ENCODE measurements at regions of chr2 and their contacts with region 1.

Region 1: DNA sequence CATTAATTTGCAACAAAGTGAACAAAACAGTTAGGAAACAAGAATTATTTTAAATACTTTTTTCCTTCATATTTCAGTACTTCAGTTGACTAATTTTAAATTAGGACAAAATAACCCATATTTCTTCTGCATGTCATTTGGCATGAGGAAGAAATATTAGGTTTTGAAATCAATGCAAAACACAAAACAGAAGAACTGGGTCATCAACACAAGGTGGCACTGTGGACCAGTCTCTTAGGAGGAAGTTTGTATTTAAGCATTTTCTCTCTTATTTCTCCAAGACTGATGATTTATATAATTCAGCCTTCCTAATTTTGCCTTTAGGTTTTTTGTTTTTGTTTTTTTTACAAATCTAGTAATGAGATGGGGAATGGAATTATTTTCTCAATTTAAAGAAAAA is 352.8 kb upstream of the KCNH7 start:
- DNase-seq: peak in 1 of 2 experiments; percentile 20
- H3K4me3 ChIP-seq: no peak overlapping the region
- H3K4me3 Mint-ChIP-seq: no peak overlapping the region
- H3K27ac Mint-ChIP-seq: no peak overlapping the region
- H3K4me1 ChIP-seq: no peaks in the 10 kb centered on the region
- H3K4me1 Mint-ChIP-seq: no peaks in the 10 kb centered on the region
- H3K27me3 ChIP-seq: no peaks in the 10 kb centered on the region
- H3K27me3 Mint-ChIP-seq: peaks cover 2% of the 10 kb centered on the region
- CTCF ChIP-seq: peak; percentile 51 to 61

Region 2: DNA sequence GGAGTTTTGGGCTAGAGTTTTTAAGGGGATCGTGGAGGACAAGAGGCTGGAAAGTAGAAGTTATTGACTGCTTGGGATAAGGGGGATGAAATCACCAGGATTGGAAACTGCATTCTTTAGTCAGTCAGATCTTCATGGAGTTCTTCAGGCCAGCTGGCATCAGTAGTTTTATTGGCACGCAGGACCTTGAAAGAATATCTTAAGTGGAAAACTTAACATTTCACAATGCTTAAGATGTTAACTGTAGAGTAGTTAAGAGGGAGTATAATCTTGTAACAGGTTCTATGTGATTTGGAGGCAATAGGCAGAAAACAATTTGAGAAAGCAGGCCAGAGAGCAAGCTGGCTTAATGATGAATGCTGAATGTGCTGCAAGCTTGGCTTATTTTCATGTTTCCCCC is 52.4 kb before region 1 on chr2:
- CTCF ChIA-PET with region 1: no interaction called
- POLR2A ChIA-PET with region 1: no interaction called
- intact Hi-C with region 1: no loop called
- DNase-seq: no peak
- H3K4me3 ChIP-seq: no peak overlapping the region
- H3K4me3 Mint-ChIP-seq: no peak overlapping the region
- H3K27ac Mint-ChIP-seq: no peak overlapping the region
- H3K4me1 ChIP-seq: no peaks in the 10 kb centered on the region
- H3K4me1 Mint-ChIP-seq: no peaks in the 10 kb centered on the region
- H3K27me3 ChIP-seq: no peaks in the 10 kb centered on the region
- H3K27me3 Mint-ChIP-seq: no peaks in the 10 kb centered on the region
- CTCF ChIP-seq: no peak

Region 3: GRCh38 chr2:163465440-163465839 is 274.1 kb after region 1 on chr2:
- CTCF ChIA-PET with region 1: no interaction called
- POLR2A ChIA-PET with region 1: no interaction called
- intact Hi-C with region 1: loop called (anchors 5 kb)
- DNase-seq: no peak
- H3K4me3 ChIP-seq: no peak overlapping the region
- H3K4me3 Mint-ChIP-seq: no peak overlapping the region
- H3K27ac Mint-ChIP-seq: no peak overlapping the region
- H3K4me1 ChIP-seq: no peaks in the 10 kb centered on the region
- H3K4me1 Mint-ChIP-seq: no peaks in the 10 kb centered on the region
- H3K27me3 ChIP-seq: no peaks in the 10 kb centered on the region
- H3K27me3 Mint-ChIP-seq: peaks cover 3% of the 10 kb centered on the region
- CTCF ChIP-seq: no peak

Region 4: DNA sequence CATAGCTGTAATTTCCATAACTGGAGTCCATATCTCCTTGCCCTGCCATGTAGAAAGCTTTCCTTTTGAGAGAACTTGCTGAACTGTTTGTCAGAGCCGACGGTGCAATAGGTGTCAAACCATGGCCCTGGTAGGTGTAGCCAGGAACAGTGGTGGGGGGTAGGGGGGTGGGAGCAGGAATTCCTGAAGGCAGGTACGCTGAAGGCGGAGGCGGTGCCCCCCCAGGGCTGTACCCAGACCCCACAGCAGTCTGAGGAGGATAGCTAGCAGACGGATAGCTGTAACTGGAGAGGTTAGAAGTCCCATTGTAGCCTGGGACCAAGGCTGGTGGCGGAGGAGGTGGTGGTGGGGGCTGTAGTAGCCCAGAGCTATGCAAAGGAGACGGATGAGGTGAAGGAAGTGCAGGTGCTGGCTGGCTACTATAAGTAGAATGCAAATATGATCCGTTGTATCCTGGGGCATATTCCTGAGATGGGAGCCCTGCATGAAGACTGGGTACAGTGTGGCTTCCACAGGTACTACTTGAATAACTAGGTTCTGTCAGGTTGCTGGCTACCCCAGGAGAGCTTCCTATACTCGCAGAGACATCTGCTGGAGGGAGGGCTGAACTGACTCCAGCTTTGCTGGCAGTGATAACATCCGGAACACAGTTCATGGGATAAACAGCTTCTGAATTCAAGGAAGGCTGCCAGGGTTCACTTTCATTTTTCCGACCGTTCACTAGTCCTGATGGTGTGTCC is 419.6 kb after region 1 on chr2:
- CTCF ChIA-PET with region 1: no interaction called
- POLR2A ChIA-PET with region 1: no interaction called
- intact Hi-C with region 1: loop called (anchors 1 kb)
- DNase-seq: peak; percentile 60 to 62
- H3K4me3 ChIP-seq: no peak overlapping the region
- H3K4me3 Mint-ChIP-seq: no peak overlapping the region
- H3K27ac Mint-ChIP-seq: no peak overlapping the region
- H3K4me1 ChIP-seq: no peaks in the 10 kb centered on the region
- H3K4me1 Mint-ChIP-seq: no peaks in the 10 kb centered on the region
- H3K27me3 ChIP-seq: no peaks in the 10 kb centered on the region
- H3K27me3 Mint-ChIP-seq: no peaks in the 10 kb centered on the region
- CTCF ChIP-seq: peak; percentile 49 to 71

Region 5: DNA sequence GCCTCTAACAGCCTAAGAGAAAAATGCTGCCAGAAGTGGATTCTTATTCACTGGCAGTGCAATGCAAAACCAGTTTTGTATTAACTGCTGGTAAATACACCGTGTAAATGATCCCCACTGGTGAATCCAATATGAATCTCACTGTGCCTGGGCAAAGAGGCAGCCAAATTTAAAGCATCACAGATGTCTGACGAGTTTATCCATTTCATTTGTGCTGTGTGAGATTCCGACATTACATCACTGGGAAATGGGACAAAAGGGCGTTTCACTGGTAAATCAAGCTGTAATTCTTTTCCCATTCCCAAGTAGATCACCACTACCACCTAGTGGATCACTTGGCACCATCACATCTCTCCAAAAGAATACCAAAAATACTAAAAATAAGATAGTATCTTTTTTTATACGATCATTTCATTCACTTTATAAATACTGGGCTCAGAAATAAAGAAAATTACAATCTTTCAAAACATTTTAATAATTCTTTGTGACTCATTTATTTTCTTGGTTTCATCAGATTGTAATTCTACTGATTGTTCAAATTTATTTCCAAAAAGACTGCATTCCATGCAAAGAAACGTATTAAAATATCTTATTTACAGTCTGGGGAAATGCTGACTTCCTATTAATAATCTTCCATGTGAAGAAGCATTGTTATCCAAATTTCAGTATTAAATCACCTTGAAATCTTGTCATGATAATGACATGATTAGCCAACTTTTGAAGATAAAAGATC is 1304.3 kb after region 1 on chr2:
- CTCF ChIA-PET with region 1: no interaction called
- POLR2A ChIA-PET with region 1: no interaction called
- intact Hi-C with region 1: loop called (anchors 1 kb)
- DNase-seq: peak in 1 of 2 experiments; percentile 40
- H3K4me3 ChIP-seq: no peak overlapping the region
- H3K4me3 Mint-ChIP-seq: no peak overlapping the region
- H3K27ac Mint-ChIP-seq: no peak overlapping the region
- H3K4me1 ChIP-seq: 0 out of 2 replicates have a peak, but pooled peaks cover 10% of the 10 kb centered on the region
- H3K4me1 Mint-ChIP-seq: peaks cover 10% of the 10 kb centered on the region
- H3K27me3 ChIP-seq: no peaks in the 10 kb centered on the region
- H3K27me3 Mint-ChIP-seq: no peaks in the 10 kb centered on the region
- CTCF ChIP-seq: peak; percentile 51 to 60

Region 6: GRCh38 chr2:164538240-164538866 is 1347.0 kb after region 1 on chr2:
- CTCF ChIA-PET with region 1: no interaction called
- POLR2A ChIA-PET with region 1: no interaction called
- intact Hi-C with region 1: loop called (anchors 1 kb)
- DNase-seq: peak in 1 of 2 experiments; percentile 42
- H3K4me3 ChIP-seq: no peak overlapping the region
- H3K4me3 Mint-ChIP-seq: no peak overlapping the region
- H3K27ac Mint-ChIP-seq: no peak overlapping the region
- H3K4me1 ChIP-seq: no peaks in the 10 kb centered on the region
- H3K4me1 Mint-ChIP-seq: no peaks in the 10 kb centered on the region
- H3K27me3 ChIP-seq: no peaks in the 10 kb centered on the region
- H3K27me3 Mint-ChIP-seq: no peaks in the 10 kb centered on the region
- CTCF ChIP-seq: peak; percentile 70 to 84